ENCODE measurements at regions of chr5 and their contacts with region 1.

Region 1: DNA sequence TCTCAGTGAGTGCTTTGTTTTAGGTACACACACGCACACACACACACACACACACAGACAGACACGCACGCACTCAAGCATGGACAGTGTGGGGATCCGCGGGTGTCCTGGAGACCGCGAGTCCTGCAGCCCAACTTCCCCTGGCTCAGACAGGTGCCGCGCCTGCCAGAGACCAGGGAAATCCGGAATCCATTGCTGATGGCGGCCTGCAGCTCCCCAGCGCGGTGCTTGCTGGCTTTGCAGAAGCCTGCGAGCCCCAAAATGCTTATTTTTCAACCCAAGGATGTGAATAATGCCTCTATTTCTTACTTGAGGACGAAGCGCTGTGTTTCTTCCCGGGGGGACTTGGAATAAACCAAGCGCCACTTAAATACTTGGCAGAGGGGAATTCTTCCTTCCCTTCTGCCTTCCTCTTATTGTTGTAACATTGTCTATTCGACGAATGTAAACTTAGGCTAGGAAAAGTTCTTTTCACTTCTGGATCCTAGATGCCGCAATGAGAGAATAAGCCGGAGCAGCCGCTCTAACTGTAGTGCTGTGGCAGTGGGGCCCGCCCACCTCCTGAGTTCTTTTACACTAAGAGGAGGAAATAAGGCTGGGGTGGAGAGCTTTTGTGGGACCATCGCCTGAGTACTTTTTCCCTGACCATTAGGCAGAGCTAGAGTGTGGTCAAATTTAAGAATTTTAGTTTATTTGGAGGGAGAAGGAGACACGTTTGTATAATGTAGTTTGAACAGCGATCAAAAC is 802 bp downstream of the ITGA2 start:
- DNase-seq: peak; percentile 78
- H3K4me3 ChIP-seq: peak overlapping the region; percentile 56 to 80 (median 61)
- H3K27ac ChIP-seq: peak overlapping the region; percentile 31
- H3K4me1 ChIP-seq: peaks cover 61% of the 10 kb centered on the region
- H3K27me3 ChIP-seq: no peaks in the 10 kb centered on the region
- CTCF ChIP-seq: peak; percentile 29 to 45
- POLR2A ChIP-seq: no peak

Region 2: DNA sequence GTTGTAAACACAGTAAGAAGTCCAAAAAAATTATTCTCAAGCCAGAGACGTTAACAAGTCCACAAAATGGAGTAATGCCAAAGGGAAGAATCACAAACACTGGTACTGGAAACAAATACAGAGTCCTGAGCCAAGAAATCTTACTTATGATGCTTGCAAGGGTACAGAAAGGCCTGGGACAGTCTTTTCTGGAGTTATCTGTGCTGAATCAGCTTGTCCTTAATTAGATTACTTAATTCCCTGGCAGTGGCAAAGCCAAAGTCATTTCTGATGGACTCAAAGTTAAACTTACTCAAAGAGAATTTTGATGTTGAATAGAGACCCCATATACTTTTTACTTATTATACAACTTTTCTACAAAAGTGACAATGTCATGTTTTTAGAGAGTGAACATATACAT is 812.8 kb before region 1 on chr5:
- CTCF ChIA-PET with region 1: no interaction called
- POLR2A ChIA-PET with region 1: no interaction called
- dilution Hi-C with region 1: no loop called
- intact Hi-C with region 1: no loop called
- DNase-seq: no peak
- H3K4me3 ChIP-seq: no peak overlapping the region
- H3K27ac ChIP-seq: no peak overlapping the region
- H3K4me1 ChIP-seq: no peaks in the 10 kb centered on the region
- H3K27me3 ChIP-seq: no peaks in the 10 kb centered on the region
- CTCF ChIP-seq: no peak
- POLR2A ChIP-seq: no peak

Region 3: DNA sequence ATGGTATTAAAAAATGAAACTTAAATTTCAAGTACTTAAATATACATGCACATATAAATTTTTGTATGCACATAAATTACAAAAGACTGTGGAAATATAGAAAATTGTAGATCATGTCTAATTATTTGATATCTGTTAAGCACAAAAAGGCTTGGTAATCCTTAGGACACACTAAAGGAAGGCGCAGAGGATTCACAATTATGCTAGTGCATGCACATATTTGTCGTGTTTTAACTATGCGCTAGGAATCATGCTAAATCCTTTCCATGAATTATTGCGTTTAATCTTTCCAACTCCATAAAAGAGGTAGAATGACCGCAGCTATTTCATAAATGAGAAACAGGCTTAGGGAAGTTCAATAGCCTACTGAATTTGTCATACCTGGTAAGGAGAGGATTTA is 446.4 kb before region 1 on chr5:
- CTCF ChIA-PET with region 1: no interaction called
- POLR2A ChIA-PET with region 1: no interaction called
- dilution Hi-C with region 1: no loop called
- intact Hi-C with region 1: no loop called
- DNase-seq: no peak
- H3K4me3 ChIP-seq: no peak overlapping the region
- H3K27ac ChIP-seq: no peak overlapping the region
- H3K4me1 ChIP-seq: no peaks in the 10 kb centered on the region
- H3K27me3 ChIP-seq: no peaks in the 10 kb centered on the region
- CTCF ChIP-seq: no peak
- POLR2A ChIP-seq: no peak

Region 4: GRCh38 chr5:52915176-52915875 is 74.6 kb before region 1 on chr5:
- CTCF ChIA-PET with region 1: interaction called, 13 read pairs
- POLR2A ChIA-PET with region 1: no interaction called
- dilution Hi-C with region 1: no loop called
- intact Hi-C with region 1: no loop called
- DNase-seq: peak; percentile 88
- H3K4me3 ChIP-seq: peak overlapping the region in 2 of 3 experiments; percentile 12 to 46
- H3K27ac ChIP-seq: no peak overlapping the region
- H3K4me1 ChIP-seq: peaks cover 7% of the 10 kb centered on the region
- H3K27me3 ChIP-seq: no peaks in the 10 kb centered on the region
- CTCF ChIP-seq: peak; percentile 53 to 58
- POLR2A ChIP-seq: no peak

Region 5: DNA sequence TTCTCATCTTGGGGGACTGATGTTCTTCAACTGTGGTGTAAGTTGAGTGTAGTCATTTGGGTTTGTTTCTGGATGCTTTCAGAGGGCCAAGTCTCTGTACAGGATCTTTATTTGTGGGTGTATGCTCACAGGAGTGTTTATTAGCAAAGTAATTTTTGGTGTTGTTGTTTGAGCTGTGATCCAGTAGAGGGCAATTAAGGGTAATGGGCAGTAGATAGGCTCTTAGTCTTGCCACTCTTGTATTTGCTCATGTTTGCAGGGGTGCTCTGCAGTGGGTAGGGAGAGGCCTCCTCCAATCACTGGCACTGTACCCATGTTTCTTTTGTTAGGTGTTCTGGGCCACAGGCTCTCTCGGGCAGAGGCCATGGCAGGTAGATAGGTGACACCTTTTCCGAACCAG is 46.7 kb before region 1 on chr5:
- CTCF ChIA-PET with region 1: interaction called, 64 read pairs
- POLR2A ChIA-PET with region 1: no interaction called
- dilution Hi-C with region 1: no loop called
- intact Hi-C with region 1: loop called (anchors 1 kb)
- DNase-seq: peak; percentile 31
- H3K4me3 ChIP-seq: no peak overlapping the region
- H3K27ac ChIP-seq: no peak overlapping the region
- H3K4me1 ChIP-seq: peaks cover 26% of the 10 kb centered on the region
- H3K27me3 ChIP-seq: no peaks in the 10 kb centered on the region
- CTCF ChIP-seq: peak; percentile 23 to 44
- POLR2A ChIP-seq: no peak

Region 6: DNA sequence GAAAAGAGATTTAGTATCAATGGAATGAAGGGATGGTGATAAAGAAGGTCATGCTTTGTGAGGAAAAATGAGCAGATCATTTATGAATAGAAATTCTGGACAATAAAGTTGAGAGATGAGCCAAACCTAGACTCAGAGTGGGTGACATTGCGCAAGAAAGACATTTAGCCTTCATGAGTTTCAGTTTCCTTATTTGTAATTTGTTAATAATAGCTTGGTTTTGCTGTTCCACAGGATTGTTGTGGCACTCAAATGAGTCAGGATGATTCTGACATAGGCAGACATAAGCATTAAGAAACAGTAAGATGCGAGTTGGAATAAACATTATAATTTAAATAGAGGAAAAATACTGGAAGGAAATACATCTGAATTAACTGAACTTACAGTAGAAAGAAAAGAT is 34.0 kb after region 1 on chr5:
- CTCF ChIA-PET with region 1: interaction called, 5 read pairs
- POLR2A ChIA-PET with region 1: no interaction called
- dilution Hi-C with region 1: no loop called
- intact Hi-C with region 1: loop called (anchors 1 kb)
- DNase-seq: peak; percentile 52
- H3K4me3 ChIP-seq: no peak overlapping the region
- H3K27ac ChIP-seq: no peak overlapping the region
- H3K4me1 ChIP-seq: peaks cover 35% of the 10 kb centered on the region
- H3K27me3 ChIP-seq: no peaks in the 10 kb centered on the region
- CTCF ChIP-seq: no peak
- POLR2A ChIP-seq: no peak

Region 7: GRCh38 chr5:53063176-53063575 is 73.2 kb after region 1 on chr5:
- CTCF ChIA-PET with region 1: no interaction called
- POLR2A ChIA-PET with region 1: no interaction called
- dilution Hi-C with region 1: no loop called
- intact Hi-C with region 1: loop called (anchors 1 kb)
- DNase-seq: peak; percentile 88
- H3K4me3 ChIP-seq: peak overlapping the region in 1 of 3 experiments; percentile 21
- H3K27ac ChIP-seq: peak overlapping the region; percentile 71
- H3K4me1 ChIP-seq: peaks cover 26% of the 10 kb centered on the region
- H3K27me3 ChIP-seq: no peaks in the 10 kb centered on the region
- CTCF ChIP-seq: no peak
- POLR2A ChIP-seq: no peak

Region 8: DNA sequence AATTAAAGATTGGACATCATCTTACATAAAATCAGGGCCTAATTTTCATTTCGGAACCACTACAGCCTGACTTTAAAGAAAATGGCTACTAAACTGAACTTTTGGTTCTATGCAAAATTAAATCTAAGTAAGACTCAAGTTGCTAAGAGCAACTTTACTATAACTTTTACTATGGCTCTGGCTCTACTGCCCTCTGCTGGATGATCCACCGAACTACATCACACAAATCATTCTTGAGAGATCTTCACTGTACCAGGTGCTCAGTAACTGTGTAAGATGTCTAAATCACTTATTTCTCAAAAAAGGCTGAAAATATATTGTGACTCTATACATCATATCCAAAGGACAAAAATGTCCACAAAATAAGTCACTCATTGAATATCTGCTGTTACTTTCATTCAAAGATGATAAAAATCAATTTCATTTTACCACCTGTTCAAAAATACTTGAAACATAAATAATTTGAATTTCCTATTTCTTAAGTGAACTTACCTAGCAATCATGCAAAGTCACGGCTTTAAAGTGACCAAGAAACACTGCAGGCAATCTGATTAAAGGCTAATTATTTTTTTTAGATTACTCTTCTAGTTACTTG is 106.1 kb after region 1 on chr5:
- CTCF ChIA-PET with region 1: interaction called, 4 read pairs
- POLR2A ChIA-PET with region 1: no interaction called
- dilution Hi-C with region 1: no loop called
- intact Hi-C with region 1: loop called (anchors 1 kb)
- DNase-seq: peak; percentile 85
- H3K4me3 ChIP-seq: no peak overlapping the region
- H3K27ac ChIP-seq: no peak overlapping the region
- H3K4me1 ChIP-seq: peaks cover 10% of the 10 kb centered on the region
- H3K27me3 ChIP-seq: no peaks in the 10 kb centered on the region
- CTCF ChIP-seq: peak; percentile 54 to 63
- POLR2A ChIP-seq: no peak